ENCODE measurements at regions of chr17 and their contacts with region 1.

Region 1: DNA sequence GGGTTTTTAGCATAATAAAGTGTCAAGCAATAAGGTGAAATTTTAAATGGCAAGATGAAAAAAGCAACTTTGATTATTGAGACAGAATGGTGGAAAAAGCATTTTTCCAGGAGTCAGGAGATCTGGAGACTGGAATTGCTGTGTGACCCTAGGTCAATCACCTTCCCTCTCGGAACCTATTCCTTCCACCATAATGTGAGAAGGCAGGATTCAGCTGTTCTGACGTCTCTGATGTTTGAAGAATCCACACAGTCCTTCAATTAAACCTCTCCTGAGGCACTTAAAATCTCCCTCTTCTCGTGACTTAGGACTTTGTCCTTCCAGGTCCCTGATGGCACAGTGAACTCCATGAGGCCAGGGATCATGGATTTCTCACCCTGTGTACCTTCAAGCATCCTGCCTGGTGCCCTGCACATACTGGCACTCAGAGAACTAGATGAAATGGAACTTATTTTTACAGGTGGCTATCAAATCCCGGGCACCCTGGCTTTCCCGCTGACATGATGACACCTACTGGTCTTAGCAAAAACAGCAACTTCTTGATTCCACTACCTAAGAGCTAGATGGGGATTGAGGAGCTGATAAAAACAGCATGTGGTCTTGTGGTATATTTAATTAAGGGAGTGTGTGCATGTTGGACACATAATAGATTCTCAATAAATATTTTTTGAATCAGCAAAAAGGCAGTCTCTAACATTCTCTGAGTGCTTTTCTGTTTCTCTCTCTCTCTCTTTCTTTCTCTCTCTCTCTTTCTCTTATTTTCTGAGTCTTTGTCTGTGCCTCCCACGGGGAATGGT is 2.3 kb upstream of the CCDC182 start:
- DNase-seq: peak; percentile 43
- H3K4me3 ChIP-seq: no peak overlapping the region
- H3K27ac ChIP-seq: no peak overlapping the region
- H3K4me1 ChIP-seq: no peaks in the 10 kb centered on the region
- H3K27me3 ChIP-seq: no peaks in the 10 kb centered on the region
- CTCF ChIP-seq: peak; percentile 22 to 80 (median 58)
- POLR2A ChIP-seq: no peak

Region 2: GRCh38 chr17:57121338-57122042 is 625.9 kb before region 1 on chr17:
- intact Hi-C with region 1: loop called (anchors 5 kb)
- DNase-seq: no peak
- H3K4me3 ChIP-seq: no peak overlapping the region
- H3K27ac ChIP-seq: peak overlapping the region in 1 of 2 donors; percentile 63
- H3K4me1 ChIP-seq: no peaks in the 10 kb centered on the region
- H3K27me3 ChIP-seq: no peaks in the 10 kb centered on the region
- CTCF ChIP-seq: peak in 2 of 4 experiments; percentile 46 to 52
- POLR2A ChIP-seq: no peak

Region 3: GRCh38 chr17:57243171-57243948 is 504.1 kb before region 1 on chr17:
- intact Hi-C with region 1: loop called (anchors 5 kb)
- DNase-seq: peak; percentile 61
- H3K4me3 ChIP-seq: no peak overlapping the region
- H3K27ac ChIP-seq: no peak overlapping the region
- H3K4me1 ChIP-seq: no peaks in the 10 kb centered on the region
- H3K27me3 ChIP-seq: no peaks in the 10 kb centered on the region
- CTCF ChIP-seq: peak; percentile 95 to 99 (median 98)
- POLR2A ChIP-seq: no peak

Region 4: GRCh38 chr17:57535249-57535966 is 212.0 kb before region 1 on chr17:
- intact Hi-C with region 1: no loop called
- DNase-seq: no peak
- H3K4me3 ChIP-seq: no peak overlapping the region
- H3K27ac ChIP-seq: peak overlapping the region in 1 of 2 donors; percentile 46
- H3K4me1 ChIP-seq: peaks cover 11% of the 10 kb centered on the region
- H3K27me3 ChIP-seq: no peaks in the 10 kb centered on the region
- CTCF ChIP-seq: no peak
- POLR2A ChIP-seq: no peak

Region 5: DNA sequence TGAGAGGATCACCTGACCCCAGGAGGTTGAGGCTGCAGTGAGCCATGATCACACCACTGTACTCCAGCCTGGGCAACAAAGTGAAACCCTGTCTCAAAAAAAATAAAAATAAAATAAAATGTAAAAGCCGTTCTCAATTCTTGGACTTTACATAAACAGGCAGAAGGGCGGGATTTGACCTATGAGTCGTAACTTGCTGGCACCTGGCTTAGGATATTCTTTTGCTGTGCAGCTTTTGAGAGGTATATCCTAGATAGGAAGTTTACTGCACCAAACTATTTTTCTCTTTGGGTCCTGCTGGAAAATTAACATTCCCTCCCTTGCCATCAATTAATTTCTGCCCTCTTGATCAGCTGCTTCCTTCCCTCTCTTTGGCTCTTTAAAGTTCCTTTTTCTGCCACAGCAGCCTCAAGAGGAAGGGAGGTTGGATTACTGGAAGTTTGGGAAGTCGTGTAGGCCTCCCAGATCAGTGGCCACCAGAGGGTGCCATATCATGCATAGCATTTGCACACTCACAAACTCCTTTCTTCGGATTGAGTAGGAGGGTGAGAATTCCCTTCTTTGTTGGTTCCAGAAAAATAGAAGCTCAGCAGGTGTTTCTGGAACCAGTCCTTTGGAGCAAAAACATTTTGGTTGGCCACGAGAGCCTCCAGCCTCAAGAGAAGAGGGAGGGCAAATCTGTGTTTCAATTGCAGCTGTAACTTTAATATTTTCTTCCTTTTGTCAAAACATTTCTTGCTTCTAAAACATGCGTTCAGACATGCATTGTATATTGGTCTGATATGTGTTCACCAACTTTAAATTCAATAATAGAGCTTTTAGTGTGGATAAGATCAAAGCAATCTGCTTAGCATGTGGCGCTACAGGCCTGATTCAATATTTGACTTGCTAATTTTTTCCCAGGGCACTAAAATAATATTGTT is 149.6 kb before region 1 on chr17:
- intact Hi-C with region 1: loop called (anchors 10 kb)
- DNase-seq: peak; percentile 57
- H3K4me3 ChIP-seq: no peak overlapping the region
- H3K27ac ChIP-seq: no peak overlapping the region
- H3K4me1 ChIP-seq: no peaks in the 10 kb centered on the region
- H3K27me3 ChIP-seq: no peaks in the 10 kb centered on the region
- CTCF ChIP-seq: peak; percentile 60 to 82 (median 74)
- POLR2A ChIP-seq: no peak

Region 6: GRCh38 chr17:57783106-57783742 is 35.8 kb after region 1 on chr17:
- intact Hi-C with region 1: no loop called
- DNase-seq: peak; percentile 62
- H3K4me3 ChIP-seq: peak overlapping the region; percentile 3 to 10
- H3K27ac ChIP-seq: no peak overlapping the region
- H3K4me1 ChIP-seq: no peaks in the 10 kb centered on the region
- H3K27me3 ChIP-seq: no peaks in the 10 kb centered on the region
- CTCF ChIP-seq: peak; percentile 59 to 83 (median 72)
- POLR2A ChIP-seq: no peak

Region 7: GRCh38 chr17:57833179-57833939 is 85.9 kb after region 1 on chr17:
- intact Hi-C with region 1: no loop called
- DNase-seq: peak; percentile 77
- H3K4me3 ChIP-seq: peak overlapping the region; percentile 19 to 30
- H3K27ac ChIP-seq: peak overlapping the region; percentile 83 to 84
- H3K4me1 ChIP-seq: peaks cover 7% of the 10 kb centered on the region
- H3K27me3 ChIP-seq: no peaks in the 10 kb centered on the region
- CTCF ChIP-seq: peak; percentile 85 to 93 (median 90)
- POLR2A ChIP-seq: no peak

Measured in prostate gland (tissue), 2 donors.